Psoas muscle (tissue), 8 donors: ENCODE measurements at regions of chr6 and their contacts with region 1.

Region 1: DNA sequence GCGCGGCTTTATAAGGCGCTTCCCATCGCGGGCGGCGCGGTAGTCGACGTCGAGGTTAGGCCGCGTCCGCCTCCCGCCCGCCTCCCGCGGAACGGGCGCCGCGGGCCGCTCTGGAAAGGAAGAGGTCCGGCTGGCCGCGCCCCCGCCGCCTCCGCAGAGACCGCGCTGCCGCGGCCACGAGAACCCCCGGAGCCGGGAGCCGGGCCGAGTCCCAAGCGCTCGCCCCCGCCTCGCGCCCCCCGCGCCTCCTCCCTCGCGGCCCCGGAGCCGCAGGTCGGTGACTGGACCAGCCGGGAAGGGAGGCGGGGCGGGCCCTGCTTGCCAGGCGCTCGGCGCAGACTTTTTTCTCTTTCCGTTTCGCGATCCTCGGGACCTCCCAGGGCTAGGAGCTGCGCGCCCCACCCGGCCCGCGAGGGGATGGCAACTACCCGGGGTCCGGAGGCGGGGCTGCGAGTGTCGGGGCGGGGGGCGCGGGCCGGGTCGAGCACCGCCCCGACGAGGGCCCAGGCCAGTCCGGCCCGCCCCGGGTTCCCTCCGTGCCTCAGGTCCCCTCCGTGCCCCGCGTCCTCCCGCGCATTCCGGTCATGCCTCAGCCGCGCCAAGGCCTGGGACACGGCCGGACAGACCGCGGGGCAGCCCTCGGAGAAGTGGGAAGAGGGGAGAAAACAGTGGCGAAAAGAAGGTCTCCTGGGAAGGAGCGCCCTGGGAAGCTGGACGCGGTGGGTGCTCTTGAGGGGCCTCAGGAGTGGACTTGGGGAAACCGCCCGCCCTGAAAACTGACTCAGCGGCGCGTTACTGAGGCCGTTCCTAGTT is 423 bp upstream of the PXDC1 start:
- DNase-seq: peak; percentile 92 to 94
- ATAC-seq: peak; percentile 73 to 75 (median 74)
- H3K4me3 ChIP-seq: peak overlapping the region; percentile 72
- H3K27ac ChIP-seq: peak overlapping the region; percentile 91
- H3K4me1 ChIP-seq: peaks cover 29% of the 10 kb centered on the region
- H3K27me3 ChIP-seq: no peaks in the 10 kb centered on the region
- CTCF ChIP-seq: peak; percentile 32

Region 2: GRCh38 chr6:3721810-3722626 is 29.9 kb before region 1 on chr6:
- intact Hi-C with region 1: no loop called
- DNase-seq: no peak
- ATAC-seq: no peak
- H3K4me3 ChIP-seq: no peak overlapping the region
- H3K27ac ChIP-seq: no peak overlapping the region
- H3K4me1 ChIP-seq: no peaks in the 10 kb centered on the region
- H3K27me3 ChIP-seq: no peaks in the 10 kb centered on the region
- CTCF ChIP-seq: no peak

Region 3: GRCh38 chr6:3813150-3813780 is 61.3 kb after region 1 on chr6:
- intact Hi-C with region 1: loop called (anchors 5 kb)
- DNase-seq: peak; percentile 70 to 82
- ATAC-seq: peak; percentile 89 to 94 (median 92)
- H3K4me3 ChIP-seq: peak overlapping the region; percentile 40
- H3K27ac ChIP-seq: peak overlapping the region; percentile 51
- H3K4me1 ChIP-seq: peaks cover 32% of the 10 kb centered on the region
- H3K27me3 ChIP-seq: no peaks in the 10 kb centered on the region
- CTCF ChIP-seq: peak; percentile 6

Region 4: GRCh38 chr6:3825851-3826581 is 74.1 kb after region 1 on chr6:
- intact Hi-C with region 1: loop called in 1 of 2 experiments (anchors 5 kb)
- DNase-seq: peak; percentile 92 to 94
- ATAC-seq: peak; percentile 93 to 95 (median 94)
- H3K4me3 ChIP-seq: peak overlapping the region; percentile 55
- H3K27ac ChIP-seq: peak overlapping the region; percentile 89
- H3K4me1 ChIP-seq: peaks cover 27% of the 10 kb centered on the region
- H3K27me3 ChIP-seq: no peaks in the 10 kb centered on the region
- CTCF ChIP-seq: no peak

Region 5: DNA sequence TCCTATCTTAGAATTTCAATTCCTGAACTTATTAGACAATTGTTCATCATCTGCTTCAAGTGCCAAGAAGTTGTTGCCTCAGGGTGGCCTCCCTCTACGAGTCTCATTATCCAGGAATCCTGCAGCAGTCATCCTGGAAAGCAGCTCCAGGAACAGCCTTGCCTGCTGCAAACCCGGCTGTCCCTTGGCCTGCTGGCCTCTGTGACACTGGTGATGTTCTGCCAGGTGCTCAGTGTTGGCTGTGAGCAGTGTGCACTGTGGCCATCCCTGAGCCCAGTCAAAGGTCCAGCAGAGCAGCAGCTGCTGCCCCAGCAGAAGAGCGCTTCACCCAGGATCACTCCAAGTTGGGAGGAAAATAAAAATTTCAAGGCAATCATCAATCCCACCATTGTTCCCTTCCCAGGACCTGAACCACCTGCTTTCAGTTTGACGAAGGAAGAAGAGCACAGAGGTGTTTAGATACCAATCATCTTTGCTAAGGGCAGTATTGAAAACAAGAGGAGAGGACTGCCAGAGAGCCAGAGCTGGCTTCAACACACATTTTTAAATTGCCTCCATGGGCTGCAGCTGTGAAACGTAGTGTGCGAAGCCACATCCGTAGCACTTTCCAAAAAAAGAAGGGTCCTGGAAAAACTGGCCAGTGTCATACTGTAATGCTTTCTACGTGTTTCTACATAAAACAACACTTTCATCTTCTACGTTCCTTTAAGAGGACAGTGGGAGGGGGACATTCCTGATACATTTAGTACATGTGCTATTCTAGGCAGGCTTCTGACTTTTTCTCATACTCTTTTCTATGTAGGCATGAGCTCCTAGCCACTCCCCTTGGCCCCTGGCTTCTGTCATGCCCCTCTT is 90.0 kb after region 1 on chr6:
- intact Hi-C with region 1: loop called in 1 of 2 experiments (anchors 5 kb)
- DNase-seq: peak; percentile 72 to 90
- ATAC-seq: peak; percentile 94 to 97 (median 96)
- H3K4me3 ChIP-seq: peak overlapping the region; percentile 20
- H3K27ac ChIP-seq: peak overlapping the region; percentile 64
- H3K4me1 ChIP-seq: peaks cover 28% of the 10 kb centered on the region
- H3K27me3 ChIP-seq: no peaks in the 10 kb centered on the region
- CTCF ChIP-seq: no peak

Region 6: GRCh38 chr6:3887150-3887700 is 135.3 kb after region 1 on chr6:
- intact Hi-C with region 1: loop called (anchors 2 to 5 kb)
- DNase-seq: no peak
- ATAC-seq: peak in 1 of 4 donors; percentile 45
- H3K4me3 ChIP-seq: no peak overlapping the region
- H3K27ac ChIP-seq: no peak overlapping the region
- H3K4me1 ChIP-seq: peaks cover 50% of the 10 kb centered on the region
- H3K27me3 ChIP-seq: no peaks in the 10 kb centered on the region
- CTCF ChIP-seq: peak; percentile 51